CD14-positive monocyte (primary cell): ENCODE measurements at regions of chr4 and their contacts with region 1.

Region 1: DNA sequence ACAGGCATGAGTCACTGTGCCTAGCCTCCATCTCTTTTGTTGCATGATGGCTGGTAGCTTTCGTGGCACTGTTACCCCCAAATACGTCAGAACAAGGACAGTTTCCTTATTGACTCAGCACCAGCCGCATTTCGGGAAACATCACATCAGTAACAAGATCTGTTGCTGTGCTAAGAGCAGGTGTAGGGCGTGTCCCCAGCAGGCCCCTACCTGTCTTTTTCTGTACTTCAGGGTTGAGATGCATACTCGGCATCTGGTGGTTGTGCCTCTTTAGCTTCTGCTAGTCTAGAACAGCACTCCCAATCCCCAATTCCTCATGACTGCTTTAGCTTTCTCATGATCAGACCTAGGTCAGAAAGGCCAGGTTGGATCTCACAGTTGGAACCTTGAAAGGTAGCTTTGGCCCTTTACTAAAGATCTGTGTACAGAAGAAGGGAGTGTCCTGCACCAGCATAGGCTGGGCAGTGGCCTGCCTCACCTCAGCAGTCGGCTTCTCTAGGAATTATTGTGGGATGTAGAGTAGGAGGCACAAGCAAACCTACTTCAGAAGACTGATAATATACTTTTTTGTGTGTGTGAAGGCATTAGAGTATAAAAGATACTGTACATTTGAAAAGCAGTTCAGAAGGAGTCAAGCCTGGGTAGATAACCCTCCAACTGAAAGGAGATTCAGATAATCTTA is 36.8 kb downstream of the NSD2 start:
- DNase-seq: no peak
- H3K4me3 ChIP-seq: no peak overlapping the region
- H3K4me3 Mint-ChIP-seq: no peak overlapping the region
- H3K27ac ChIP-seq: peak overlapping the region in 1 of 2 donors; percentile 31
- H3K27ac Mint-ChIP-seq: peak overlapping the region in 3 of 7 donors; percentile 35 to 69 (median 53)
- H3K4me1 ChIP-seq: no peaks in the 10 kb centered on the region
- H3K4me1 Mint-ChIP-seq: no peaks in the 10 kb centered on the region
- H3K27me3 ChIP-seq: no peaks in the 10 kb centered on the region
- H3K27me3 Mint-ChIP-seq: no peaks in the 10 kb centered on the region
- CTCF ChIP-seq: no peak

Region 2: DNA sequence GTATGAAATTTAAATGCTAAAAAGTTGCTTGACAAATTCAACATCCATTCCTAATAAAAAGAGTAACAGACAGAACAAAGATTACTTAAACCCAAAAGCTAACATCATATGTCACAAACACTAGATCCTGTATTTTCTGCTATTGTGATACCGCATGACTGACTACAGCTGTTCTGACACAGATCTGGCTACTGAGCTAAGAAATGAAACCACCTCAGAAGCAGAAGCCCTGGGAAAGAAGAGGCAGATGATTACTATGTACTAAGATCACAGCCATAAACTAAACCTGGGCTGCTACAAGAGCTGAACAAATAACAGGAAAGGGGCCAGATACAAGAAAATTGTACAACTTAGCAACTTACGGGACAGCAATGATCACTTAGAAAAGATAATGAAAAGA is 61.4 kb before region 1 on chr4:
- intact Hi-C with region 1: loop called (anchors 5 to 10 kb)
- DNase-seq: no peak
- H3K4me3 ChIP-seq: no peak overlapping the region
- H3K4me3 Mint-ChIP-seq: no peak overlapping the region
- H3K27ac ChIP-seq: no peak overlapping the region
- H3K27ac Mint-ChIP-seq: no peak overlapping the region
- H3K4me1 ChIP-seq: no peaks in the 10 kb centered on the region
- H3K4me1 Mint-ChIP-seq: no peaks in the 10 kb centered on the region
- H3K27me3 ChIP-seq: no peaks in the 10 kb centered on the region
- H3K27me3 Mint-ChIP-seq: no peaks in the 10 kb centered on the region
- CTCF ChIP-seq: no peak